Cardiac septum (tissue), 1 donor: ENCODE measurements at regions of chr20 and their contacts with region 1.

Region 1: DNA sequence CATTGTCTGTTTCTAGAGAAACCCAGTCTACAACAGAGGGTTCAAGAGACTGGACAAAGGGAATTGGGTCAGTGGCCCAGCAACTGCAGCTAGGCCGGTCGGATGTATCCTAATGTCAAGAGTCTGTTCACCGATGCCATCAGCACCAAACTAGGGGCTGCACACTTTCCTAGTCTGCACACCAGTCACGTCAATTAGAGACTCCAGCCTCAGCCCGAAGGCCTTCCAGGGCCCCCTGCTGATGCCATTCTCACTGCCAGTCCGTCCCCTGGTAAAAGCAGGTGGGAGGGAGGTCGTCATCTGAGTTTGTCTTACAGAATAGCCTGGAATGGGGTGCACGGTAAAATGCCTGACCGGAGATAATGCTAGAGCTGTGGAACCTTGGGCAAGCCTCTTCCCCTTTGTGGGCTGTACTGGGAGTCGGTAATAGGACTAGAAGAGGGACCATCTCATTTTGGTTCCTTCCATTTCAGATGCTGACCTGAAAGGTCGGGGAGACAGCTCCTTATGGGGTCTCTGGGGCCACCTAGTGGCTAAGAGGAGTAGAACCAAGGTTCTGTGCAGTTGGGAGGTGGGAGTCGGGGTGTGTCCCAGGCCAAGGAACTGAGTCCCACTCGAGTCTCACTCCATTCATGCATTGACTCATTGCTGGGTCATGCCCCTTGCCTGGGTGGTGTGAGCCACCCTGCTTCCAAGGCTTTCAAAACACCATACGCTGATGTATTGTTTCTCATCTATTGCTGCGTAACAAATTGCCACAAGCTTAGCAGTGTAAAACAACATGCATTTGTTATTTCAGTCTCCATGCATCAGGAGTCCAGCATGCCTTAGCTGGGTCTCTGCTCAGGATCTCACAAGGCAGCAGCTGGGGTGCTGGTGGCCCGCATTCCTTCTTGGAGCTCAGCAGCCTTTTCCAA is 5.1 kb downstream of the SOX12 start:
- DNase-seq: no peak

Region 2: GRCh38 chr20:278607-279571 is 51.6 kb before region 1 on chr20:
- intact Hi-C with region 1: loop called (anchors 10 kb)
- DNase-seq: no peak

Region 3: DNA sequence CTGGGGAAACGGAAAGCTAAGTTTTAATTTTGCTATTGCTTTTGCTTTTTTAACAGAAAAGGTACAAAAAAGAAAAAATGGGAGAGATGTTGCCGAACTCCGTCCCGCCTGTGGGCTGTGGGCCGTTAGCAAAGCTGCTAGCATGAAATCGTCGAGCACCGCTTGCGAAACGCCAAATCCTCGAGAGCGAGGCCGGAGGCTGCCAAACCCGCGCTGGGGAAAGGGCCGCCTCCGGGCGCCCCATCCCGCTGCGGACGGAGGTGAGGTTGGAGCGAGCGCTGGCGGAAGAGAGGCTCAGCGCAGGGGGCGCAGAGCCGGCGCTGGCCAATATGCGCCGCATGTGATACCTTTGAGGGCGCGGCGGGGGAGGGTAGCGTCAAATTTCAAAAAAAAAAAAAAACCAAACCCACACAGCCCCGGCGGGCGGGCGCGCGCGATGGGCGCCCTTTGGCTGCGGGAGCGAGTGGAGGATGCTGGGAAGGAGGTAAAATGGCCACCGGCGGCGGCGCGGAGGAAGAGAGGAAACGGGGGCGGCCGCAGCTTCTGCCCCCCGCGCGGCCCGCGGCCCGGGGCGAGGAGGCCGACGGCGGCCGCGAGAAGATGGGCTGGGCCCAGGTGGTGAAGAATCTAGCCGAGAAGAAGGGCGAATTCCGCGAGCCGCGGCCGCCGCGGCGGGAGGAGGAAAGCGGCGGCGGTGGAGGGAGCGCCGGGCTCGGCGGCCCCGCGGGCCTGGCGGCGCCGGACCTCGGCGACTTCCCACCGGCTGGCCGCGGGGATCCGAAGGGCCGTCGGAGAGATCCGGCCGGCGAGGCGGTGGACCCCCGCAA is 33.2 kb before region 1 on chr20 and contains the start of gene ZCCHC3:
- intact Hi-C with region 1: loop called (anchors 2 kb)
- DNase-seq: peak; percentile 92
- total RNA-seq, gene ZCCHC3: 10.4 TPM

Region 4: GRCh38 chr20:347640-348484 is 17.4 kb after region 1 on chr20:
- intact Hi-C with region 1: loop called (anchors 2 kb)
- DNase-seq: peak; percentile 93

Region 5: GRCh38 chr20:438571-439469 is 108.3 kb after region 1 on chr20:
- intact Hi-C with region 1: no loop called
- DNase-seq: no peak